ENCODE measurements at regions of chr1 and their contacts with region 1.

Region 1: GRCh38 chr1:183227963-183228649 is 42.0 kb downstream of the LAMC2 start:
- DNase-seq: peak; percentile 57 to 85
- H3K4me3 ChIP-seq: no peak overlapping the region
- H3K4me1 ChIP-seq: peaks cover 2% of the 10 kb centered on the region; the same call in 1 of the 2 replicates
- H3K27me3 ChIP-seq: no peaks in the 10 kb centered on the region

Region 2: DNA sequence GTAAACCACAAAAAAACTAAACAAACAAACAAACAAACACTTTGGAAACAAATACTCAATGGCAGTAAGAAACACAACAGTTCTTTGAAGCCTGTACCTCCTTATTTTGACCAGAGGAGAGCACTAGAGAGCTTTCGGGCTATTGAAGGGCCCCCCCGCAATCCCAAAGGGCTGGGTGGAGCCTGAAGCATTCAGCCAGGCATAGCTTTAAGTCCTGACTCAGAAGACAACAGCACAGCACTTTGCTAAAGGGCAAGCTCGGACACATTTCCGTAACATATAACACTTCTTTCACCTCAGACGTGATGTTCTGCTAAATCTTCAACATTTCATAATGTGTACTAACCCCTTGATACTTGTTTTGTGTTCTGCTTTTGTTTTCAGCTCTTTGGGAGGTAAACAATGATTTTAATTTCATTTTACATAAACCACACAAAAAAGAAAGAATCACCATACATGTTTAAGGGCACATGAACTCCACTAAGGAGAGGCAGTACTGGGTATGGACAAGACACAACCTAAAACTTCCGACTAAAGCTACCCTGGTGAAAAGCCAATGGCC is 265.5 kb before region 1 on chr1:
- in situ Hi-C with region 1: loop called (anchors 25 kb)
- DNase-seq: peak; percentile 83
- H3K4me3 ChIP-seq: no peak overlapping the region
- H3K4me1 ChIP-seq: peaks cover 24% of the 10 kb centered on the region
- H3K27me3 ChIP-seq: no peaks in the 10 kb centered on the region

Measured in HAP-1 (cell line).